ENCODE measurements at regions of chr2 and their contacts with region 1.

Region 1: GRCh38 chr2:198309673-198310280 is 505.4 kb downstream of the PLCL1 start:
- DNase-seq: no peak
- ATAC-seq: no peak

Region 2: GRCh38 chr2:199739413-199740110 is 1429.8 kb after region 1 on chr2:
- intact Hi-C with region 1: loop called (anchors 10 kb)
- DNase-seq: peak; percentile 77
- ATAC-seq: peak; percentile 32